Panc1 (cell line): ENCODE measurements at regions of chr13 and their contacts with region 1.

Region 1: DNA sequence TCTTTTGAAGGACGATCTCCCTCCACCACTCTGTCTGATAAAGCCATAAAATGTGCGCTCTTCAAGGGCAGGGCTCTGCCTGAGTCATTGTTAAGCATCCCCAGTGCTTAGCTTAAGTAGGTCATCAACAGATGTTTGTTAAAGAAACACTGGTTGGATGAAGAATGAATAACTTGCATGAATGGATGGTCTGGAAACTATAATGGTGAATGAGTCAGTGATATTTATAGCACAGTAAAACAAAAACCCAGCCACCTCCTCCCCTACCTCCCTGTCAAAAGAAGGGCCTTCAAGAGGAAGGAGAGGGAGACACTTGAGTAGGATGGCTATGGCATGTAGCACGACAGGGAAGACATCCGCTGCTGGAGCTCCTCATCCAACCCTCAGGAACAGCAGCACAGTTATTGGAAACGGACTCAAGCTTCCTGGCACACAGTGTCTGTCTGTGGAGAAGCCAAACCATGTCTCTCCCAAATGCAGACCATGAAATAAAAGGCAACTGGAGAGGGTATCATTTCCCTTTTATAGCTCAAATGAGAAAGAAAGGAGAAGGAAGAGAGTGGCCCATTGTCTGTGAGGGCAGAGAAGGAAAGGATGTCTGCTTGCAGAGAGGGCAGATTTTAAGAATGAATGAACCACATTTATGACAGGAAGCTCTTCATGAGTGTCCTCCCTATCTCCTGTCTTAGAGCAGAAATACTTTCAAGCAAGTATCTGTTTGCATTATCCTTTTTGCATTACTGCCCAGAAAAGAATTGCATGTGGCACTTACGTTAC is 183.5 kb upstream of the UBL3 start:
- DNase-seq: no peak
- ATAC-seq: no peak
- H3K4me3 ChIP-seq: no peak overlapping the region
- H3K27ac ChIP-seq: no peak overlapping the region
- H3K4me1 ChIP-seq: no peaks in the 10 kb centered on the region
- H3K27me3 ChIP-seq: no peaks in the 10 kb centered on the region
- CTCF ChIP-seq: no peak

Region 2: DNA sequence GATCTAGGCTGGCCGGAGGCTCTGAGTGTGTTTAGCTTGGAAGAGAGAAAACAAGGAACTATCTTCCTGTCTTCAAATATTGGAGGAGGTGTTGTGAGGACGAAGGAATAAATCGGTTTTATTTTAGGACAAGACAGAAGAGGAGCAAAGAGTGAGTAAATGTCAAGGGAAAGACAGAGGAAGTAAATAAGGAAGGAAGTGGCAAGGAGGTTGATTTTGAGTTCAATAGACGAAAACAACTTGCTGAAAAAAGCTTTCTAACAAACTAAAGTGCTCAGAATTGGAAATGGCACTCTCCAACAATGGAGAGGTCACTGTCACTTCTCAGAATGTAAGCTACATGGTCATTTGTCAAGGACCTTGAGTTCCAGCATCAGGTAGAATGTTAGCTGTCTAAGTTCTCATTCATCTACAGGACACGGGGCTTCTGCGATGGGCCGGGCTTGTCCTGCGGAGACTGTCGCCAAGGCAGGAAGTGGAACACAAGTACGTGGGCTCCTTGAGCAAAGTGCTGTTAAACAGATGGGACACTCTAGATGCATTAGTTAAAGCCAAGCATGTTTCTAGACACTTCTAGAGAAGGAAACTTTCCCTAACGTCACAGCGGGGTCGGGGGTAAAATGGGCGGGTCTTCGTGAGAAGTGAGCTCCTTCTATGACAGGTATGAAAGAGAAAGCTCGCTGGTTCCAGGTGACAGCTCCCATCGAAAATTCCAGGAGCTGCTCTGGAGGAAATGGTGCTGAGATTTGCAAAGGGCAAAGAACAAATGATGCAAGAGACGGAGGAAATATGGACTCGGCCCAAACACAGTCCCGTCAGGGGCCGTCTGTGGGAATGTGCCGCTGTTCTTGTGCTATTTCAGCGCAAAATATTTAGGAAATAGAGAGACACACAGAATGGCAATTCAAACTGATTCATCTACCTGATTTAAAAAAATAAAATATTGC is 79.5 kb before region 1 on chr13:
- CTCF ChIA-PET with region 1: no interaction called
- POLR2A ChIA-PET with region 1: no interaction called
- in situ Hi-C with region 1: no loop called
- intact Hi-C with region 1: no loop called
- DNase-seq: no peak
- ATAC-seq: no peak
- H3K4me3 ChIP-seq: no peak overlapping the region
- H3K27ac ChIP-seq: no peak overlapping the region
- H3K4me1 ChIP-seq: no peaks in the 10 kb centered on the region
- H3K27me3 ChIP-seq: no peaks in the 10 kb centered on the region
- CTCF ChIP-seq: no peak

Region 3: DNA sequence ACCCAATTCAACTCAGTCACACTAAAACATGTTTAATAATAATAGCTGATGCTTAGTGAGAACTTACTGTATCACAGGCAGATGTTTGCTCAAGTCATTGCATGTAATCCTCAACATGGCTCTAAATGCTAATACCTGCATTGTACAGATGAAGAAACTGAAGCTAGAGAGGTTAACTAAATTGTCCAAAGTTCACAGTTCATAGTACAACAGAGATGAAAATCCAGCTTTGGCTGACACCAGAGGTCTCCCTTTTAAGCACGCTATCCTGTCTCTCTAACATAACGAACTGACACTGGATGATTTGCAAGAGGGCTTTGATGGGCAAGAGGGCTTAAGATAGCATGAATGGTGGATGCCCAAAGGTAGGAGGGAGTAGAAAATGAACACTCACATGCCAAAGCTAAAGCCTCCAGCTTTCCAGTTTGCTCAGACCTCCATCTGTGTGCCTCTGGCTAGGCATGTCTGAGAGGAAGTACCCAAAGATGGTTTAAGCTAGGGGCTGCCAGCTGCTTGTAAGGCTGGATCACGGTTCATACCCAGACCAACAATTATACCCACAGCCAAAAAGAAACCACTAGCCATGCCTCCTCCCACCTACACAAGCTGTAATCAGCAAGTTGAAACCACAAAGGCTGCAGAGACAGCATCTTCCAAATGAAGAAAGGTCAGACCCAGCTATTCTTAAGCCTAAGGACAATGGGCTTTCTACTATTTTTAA is 13.4 kb after region 1 on chr13:
- CTCF ChIA-PET with region 1: interaction called, 11 read pairs
- POLR2A ChIA-PET with region 1: no interaction called
- in situ Hi-C with region 1: no loop called
- intact Hi-C with region 1: no loop called
- DNase-seq: no peak
- ATAC-seq: no peak
- H3K4me3 ChIP-seq: no peak overlapping the region
- H3K27ac ChIP-seq: no peak overlapping the region
- H3K4me1 ChIP-seq: no peaks in the 10 kb centered on the region
- H3K27me3 ChIP-seq: no peaks in the 10 kb centered on the region
- CTCF ChIP-seq: no peak